HCT116 (cell line): ENCODE measurements at regions of chr3 and their contacts with region 1.

Region 1: DNA sequence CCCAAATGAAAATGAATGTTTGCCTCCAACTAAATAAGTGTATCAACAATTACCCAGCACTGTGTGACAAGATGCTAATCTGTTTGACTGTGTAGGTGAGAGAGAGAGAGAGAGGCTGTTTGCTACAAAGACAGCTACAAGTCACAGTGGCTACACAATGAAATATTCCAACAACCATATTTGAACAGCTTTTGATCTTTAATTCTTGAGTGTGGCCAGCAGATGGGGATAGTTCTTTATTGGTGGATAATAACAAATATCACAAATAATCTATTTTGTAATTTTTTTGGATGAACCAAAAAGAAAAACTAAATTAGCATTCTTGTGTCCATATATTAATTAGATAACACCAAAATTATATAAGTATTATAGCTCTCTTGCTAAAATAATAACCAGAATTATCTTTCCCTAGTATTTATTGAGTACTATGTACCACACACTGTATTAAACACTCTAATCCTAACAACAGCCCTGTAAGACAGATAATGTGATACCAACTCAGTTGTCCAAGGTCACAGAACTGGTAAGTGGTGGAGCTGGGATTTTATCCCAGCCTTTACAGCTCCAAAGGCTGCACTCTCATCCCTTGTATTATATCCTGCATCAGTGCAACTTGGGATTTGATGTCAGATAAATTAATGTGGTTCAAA is 61.9 kb upstream of the C3orf80 start:
- DNase-seq: peak; percentile 23
- ATAC-seq: peak; percentile 75
- H3K4me3 ChIP-seq: no peak overlapping the region
- H3K27ac ChIP-seq: no peak overlapping the region
- H3K4me1 ChIP-seq: no peaks in the 10 kb centered on the region
- H3K27me3 ChIP-seq: no peaks in the 10 kb centered on the region
- CTCF ChIP-seq: peak; percentile 26 to 73 (median 54); a peak in 4 of 6 replicates
- POLR2A ChIP-seq: no peak
- RAD21 ChIP-seq: peak; percentile 80

Region 2: DNA sequence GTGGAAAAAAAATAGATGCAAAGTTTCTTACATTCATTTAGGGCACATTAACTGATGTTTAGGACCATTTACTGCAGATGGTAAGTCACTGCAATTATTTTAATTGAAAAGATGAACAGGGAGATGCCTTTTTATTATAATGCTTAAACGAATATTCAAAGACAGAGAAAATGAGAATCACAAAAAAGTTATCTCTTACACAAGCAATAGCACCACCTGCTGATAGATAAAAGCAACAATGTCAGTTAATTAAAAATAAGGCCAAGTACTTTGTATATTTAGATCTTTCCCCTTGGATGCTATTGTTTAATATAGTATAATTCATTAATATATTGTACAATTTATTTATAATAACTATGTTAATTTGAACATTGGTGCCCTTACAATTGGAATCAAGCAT is 179.8 kb after region 1 on chr3:
- CTCF ChIA-PET with region 1: interaction called, 20 read pairs
- POLR2A ChIA-PET with region 1: no interaction called
- RAD21 ChIA-PET with region 1: no interaction called
- intact Hi-C with region 1: loop called (anchors 1 kb)
- DNase-seq: no peak
- ATAC-seq: no peak
- H3K4me3 ChIP-seq: no peak overlapping the region
- H3K27ac ChIP-seq: no peak overlapping the region
- H3K4me1 ChIP-seq: no peaks in the 10 kb centered on the region
- H3K27me3 ChIP-seq: no peaks in the 10 kb centered on the region
- CTCF ChIP-seq: peak; percentile 34 to 63 (median 45); a peak in 3 of 6 replicates
- POLR2A ChIP-seq: no peak
- RAD21 ChIP-seq: peak; percentile 67

Region 3: DNA sequence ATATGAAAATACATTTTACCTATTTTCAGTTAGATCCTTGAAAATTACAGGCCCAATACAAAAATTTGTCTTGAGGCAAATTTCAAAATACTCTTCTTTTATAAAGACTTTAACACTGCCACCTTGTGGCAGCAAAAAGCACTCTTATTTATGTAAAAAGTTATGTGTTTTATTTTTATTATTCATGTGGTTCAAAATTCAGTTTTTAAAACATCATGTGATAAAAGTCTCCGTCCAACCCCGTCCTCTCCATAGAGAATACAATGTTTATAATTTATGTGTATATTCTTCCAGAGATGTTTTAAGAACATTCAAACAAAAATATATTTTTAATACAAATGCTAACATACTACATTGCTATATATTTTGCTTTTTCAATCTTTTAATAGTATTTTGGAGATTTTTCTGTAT is 323.1 kb after region 1 on chr3:
- CTCF ChIA-PET with region 1: interaction called, 5 read pairs
- POLR2A ChIA-PET with region 1: no interaction called
- RAD21 ChIA-PET with region 1: no interaction called
- intact Hi-C with region 1: loop called (anchors 5 kb)
- DNase-seq: peak; percentile 18
- ATAC-seq: no peak
- H3K4me3 ChIP-seq: no peak overlapping the region
- H3K27ac ChIP-seq: no peak overlapping the region
- H3K4me1 ChIP-seq: no peaks in the 10 kb centered on the region
- H3K27me3 ChIP-seq: no peaks in the 10 kb centered on the region
- CTCF ChIP-seq: peak; percentile 42 to 66 (median 48); a peak in 5 of 6 replicates
- POLR2A ChIP-seq: no peak
- RAD21 ChIP-seq: peak; percentile 61